MCF 10A (cell line): ENCODE measurements at regions of chr3 and their contacts with region 1.

Region 1: DNA sequence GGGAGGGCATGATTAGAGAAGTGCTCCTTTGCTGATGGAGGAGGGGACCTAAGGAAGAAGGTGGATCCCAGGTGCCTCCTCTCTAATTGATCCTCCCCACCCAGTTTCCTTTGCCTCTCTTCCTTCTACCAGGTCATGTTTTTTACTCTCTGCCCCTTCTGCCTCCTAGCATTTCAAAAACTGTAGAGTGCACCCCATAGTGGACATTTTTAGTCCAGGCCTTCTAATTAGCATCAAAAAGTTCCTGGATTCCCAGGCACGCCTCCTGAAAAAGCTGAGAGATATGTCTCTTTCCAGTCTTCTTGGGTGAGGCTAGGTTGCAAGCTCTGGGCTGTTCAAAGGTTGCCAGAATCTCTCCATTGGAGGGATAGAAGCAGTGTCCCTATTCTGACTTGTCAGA is 18.7 kb upstream of the ITGB5 start:
- DNase-seq: peak; percentile 16
- H3K4me3 Mint-ChIP-seq: no peak overlapping the region
- H3K27ac Mint-ChIP-seq: no peak overlapping the region
- H3K4me1 Mint-ChIP-seq: no peaks in the 10 kb centered on the region
- H3K27me3 Mint-ChIP-seq: peaks cover 31% of the 10 kb centered on the region
- CTCF ChIP-seq: no peak

Region 2: DNA sequence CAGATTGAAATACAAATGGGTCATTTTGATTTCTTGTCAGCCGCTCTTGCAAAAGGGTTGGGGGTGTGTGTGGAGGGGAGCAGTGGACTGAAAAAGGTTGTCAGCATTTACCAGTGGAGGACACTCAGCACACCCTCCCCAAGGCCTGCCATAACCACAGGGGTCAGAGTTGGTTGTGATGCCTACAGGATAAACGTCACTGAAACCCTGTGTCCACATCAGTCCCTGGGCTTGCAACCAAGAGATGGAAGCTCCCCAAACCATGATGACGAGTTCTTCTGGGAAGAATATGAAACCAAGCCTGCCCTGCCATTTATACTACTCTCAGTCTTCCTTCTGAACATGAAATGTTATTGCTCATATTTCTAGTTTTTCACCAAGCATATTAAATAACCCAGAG is 229.6 kb before region 1 on chr3:
- CTCF ChIA-PET with region 1: no interaction called
- POLR2A ChIA-PET with region 1: no interaction called
- intact Hi-C with region 1: no loop called
- DNase-seq: peak; percentile 15
- H3K4me3 Mint-ChIP-seq: no peak overlapping the region
- H3K27ac Mint-ChIP-seq: no peak overlapping the region
- H3K4me1 Mint-ChIP-seq: no peaks in the 10 kb centered on the region
- H3K27me3 Mint-ChIP-seq: no peaks in the 10 kb centered on the region
- CTCF ChIP-seq: no peak

Region 3: GRCh38 chr3:124688581-124689454 is 217.0 kb before region 1 on chr3:
- CTCF ChIA-PET with region 1: interaction called, 4 read pairs
- POLR2A ChIA-PET with region 1: no interaction called
- intact Hi-C with region 1: loop called (anchors 5 kb)
- DNase-seq: peak; percentile 79
- H3K4me3 Mint-ChIP-seq: no peak overlapping the region
- H3K27ac Mint-ChIP-seq: no peak overlapping the region
- H3K4me1 Mint-ChIP-seq: peaks cover 4% of the 10 kb centered on the region
- H3K27me3 Mint-ChIP-seq: no peaks in the 10 kb centered on the region
- CTCF ChIP-seq: peak; percentile 72

Region 4: GRCh38 chr3:124741027-124741426 is 164.8 kb before region 1 on chr3:
- CTCF ChIA-PET with region 1: interaction called, 13 read pairs
- POLR2A ChIA-PET with region 1: no interaction called
- intact Hi-C with region 1: no loop called
- DNase-seq: peak; percentile 83
- H3K4me3 Mint-ChIP-seq: no peak overlapping the region
- H3K27ac Mint-ChIP-seq: peak overlapping the region; percentile 24
- H3K4me1 Mint-ChIP-seq: peaks cover 21% of the 10 kb centered on the region
- H3K27me3 Mint-ChIP-seq: no peaks in the 10 kb centered on the region
- CTCF ChIP-seq: no peak

Region 5: DNA sequence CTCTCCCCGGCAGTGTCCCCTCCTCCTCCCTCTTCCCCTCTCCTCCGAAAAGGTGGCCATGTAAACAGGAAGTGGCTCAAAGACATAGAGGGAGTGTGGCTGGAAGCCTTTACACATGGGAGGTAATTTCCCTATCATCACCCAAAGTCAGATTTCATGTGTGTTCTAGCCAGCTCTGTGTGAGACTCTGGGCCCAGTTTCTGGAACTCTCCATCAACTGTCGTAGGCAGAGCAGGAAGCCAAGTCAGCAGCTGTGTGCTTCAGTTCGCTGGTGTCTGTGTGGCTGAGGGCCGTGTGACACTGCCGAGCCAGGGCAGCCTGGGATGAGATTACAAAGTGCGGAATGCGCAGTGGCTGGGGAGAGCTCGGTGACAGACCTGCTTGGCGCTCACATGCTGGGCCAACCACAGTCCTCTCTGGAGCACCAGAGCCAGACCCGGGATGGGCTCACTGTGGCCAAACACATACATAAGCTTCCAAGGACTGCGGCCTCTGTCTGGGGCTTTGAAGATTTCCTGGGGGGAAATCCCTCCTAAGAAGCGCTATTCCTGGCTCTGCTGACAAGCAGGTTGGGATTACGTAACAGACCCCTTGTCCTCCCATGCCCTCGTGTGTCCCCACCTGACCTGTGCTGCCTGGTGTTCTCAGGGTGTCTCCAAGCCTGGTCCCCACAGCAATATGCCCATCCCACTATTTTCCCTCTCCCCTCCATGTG is 124.9 kb before region 1 on chr3:
- CTCF ChIA-PET with region 1: interaction called, 259 read pairs
- POLR2A ChIA-PET with region 1: interaction called, 17 read pairs
- intact Hi-C with region 1: loop called (anchors 1 kb)
- DNase-seq: no peak
- H3K4me3 Mint-ChIP-seq: no peak overlapping the region
- H3K27ac Mint-ChIP-seq: peak overlapping the region; percentile 42
- H3K4me1 Mint-ChIP-seq: no peaks in the 10 kb centered on the region
- H3K27me3 Mint-ChIP-seq: no peaks in the 10 kb centered on the region
- CTCF ChIP-seq: no peak

Region 6: DNA sequence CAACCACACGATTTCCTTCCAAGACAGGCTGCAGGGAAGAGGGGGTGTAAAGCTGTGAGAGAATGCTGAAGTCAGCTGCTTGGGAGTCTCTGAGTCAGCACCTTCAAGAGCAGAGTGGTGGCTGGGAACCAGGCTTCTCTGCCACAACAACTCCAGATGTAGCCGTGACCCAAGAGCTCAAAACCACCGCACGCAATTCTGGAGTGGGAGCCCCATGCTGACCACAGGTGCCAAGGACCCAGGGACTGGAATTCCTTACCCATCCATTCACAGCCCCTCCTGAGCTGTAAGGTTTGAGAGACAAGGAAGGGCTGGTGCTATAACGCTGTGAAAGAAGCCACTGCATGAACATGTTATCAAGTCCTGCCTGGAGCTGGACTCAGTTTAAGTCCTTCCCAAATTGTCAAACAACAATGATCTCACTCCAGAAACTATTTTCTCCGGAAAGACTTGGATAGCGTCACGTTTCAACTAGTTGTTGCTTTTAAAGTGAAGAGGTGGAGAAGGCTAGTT is 114.2 kb before region 1 on chr3:
- CTCF ChIA-PET with region 1: interaction called, 259 read pairs
- POLR2A ChIA-PET with region 1: interaction called, 17 read pairs
- intact Hi-C with region 1: loop called (anchors 1 kb)
- DNase-seq: no peak
- H3K4me3 Mint-ChIP-seq: no peak overlapping the region
- H3K27ac Mint-ChIP-seq: no peak overlapping the region
- H3K4me1 Mint-ChIP-seq: peaks cover 28% of the 10 kb centered on the region
- H3K27me3 Mint-ChIP-seq: no peaks in the 10 kb centered on the region
- CTCF ChIP-seq: no peak

Region 7: DNA sequence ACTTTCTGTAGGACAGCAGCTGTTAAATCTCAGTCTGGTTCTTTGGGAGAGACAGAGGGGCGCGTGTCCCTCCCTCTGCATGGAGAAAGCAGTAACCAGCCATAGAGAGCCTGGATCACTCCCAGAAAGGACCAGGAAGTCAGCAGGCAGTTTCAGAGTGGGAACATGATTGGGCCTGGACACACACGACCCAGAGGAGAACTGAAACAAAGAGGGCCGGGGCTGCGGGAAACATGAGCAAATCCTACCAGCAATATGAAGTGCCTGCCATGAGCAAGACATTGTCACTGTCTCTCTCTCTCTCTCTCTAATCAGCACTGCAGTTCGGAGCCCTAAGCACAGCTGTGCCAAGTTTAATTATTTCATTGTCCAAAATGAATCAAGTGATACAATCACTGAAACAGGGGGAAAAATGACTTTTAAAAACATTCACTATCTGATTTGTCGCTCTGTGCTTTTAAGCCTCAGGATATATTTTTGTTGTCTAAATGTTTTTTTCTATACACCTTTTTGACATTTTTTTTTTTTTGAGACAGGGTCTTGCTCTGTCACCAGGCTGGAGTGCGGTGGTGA is 11.1 kb after region 1 on chr3:
- CTCF ChIA-PET with region 1: interaction called, 16 read pairs
- POLR2A ChIA-PET with region 1: interaction called, 3 read pairs
- intact Hi-C with region 1: no loop called
- DNase-seq: no peak
- H3K4me3 Mint-ChIP-seq: no peak overlapping the region
- H3K27ac Mint-ChIP-seq: no peak overlapping the region
- H3K4me1 Mint-ChIP-seq: no peaks in the 10 kb centered on the region
- H3K27me3 Mint-ChIP-seq: peaks cover 21% of the 10 kb centered on the region
- CTCF ChIP-seq: no peak